HCT116 (cell line): ENCODE measurements at regions of chr2 and their contacts with region 1.

Region 1: GRCh38 chr2:157769856-157770255 is 106.3 kb downstream of the ACVR1 start:
- DNase-seq: no peak
- ATAC-seq: no peak
- H3K4me3 ChIP-seq: no peak overlapping the region
- H3K27ac ChIP-seq: no peak overlapping the region
- H3K4me1 ChIP-seq: no peaks in the 10 kb centered on the region
- H3K27me3 ChIP-seq: no peaks in the 10 kb centered on the region
- CTCF ChIP-seq: no peak
- POLR2A ChIP-seq: no peak
- RAD21 ChIP-seq: no peak

Region 2: GRCh38 chr2:156476850-156477206 is 1293.0 kb before region 1 on chr2:
- CTCF ChIA-PET with region 1: no interaction called
- POLR2A ChIA-PET with region 1: no interaction called
- RAD21 ChIA-PET with region 1: no interaction called
- intact Hi-C with region 1: no loop called
- DNase-seq: no peak
- ATAC-seq: no peak
- H3K4me3 ChIP-seq: no peak overlapping the region
- H3K27ac ChIP-seq: no peak overlapping the region
- H3K4me1 ChIP-seq: peaks cover 0 to 4% of the 10 kb centered on the region in 2 experiments; a peak in 1 of 4 replicates
- H3K27me3 ChIP-seq: no peaks in the 10 kb centered on the region
- CTCF ChIP-seq: no peak
- POLR2A ChIP-seq: no peak
- RAD21 ChIP-seq: no peak

Region 3: GRCh38 chr2:157509744-157510143 is 260.1 kb before region 1 on chr2:
- CTCF ChIA-PET with region 1: no interaction called
- POLR2A ChIA-PET with region 1: no interaction called
- RAD21 ChIA-PET with region 1: no interaction called
- intact Hi-C with region 1: loop called (anchors 5 kb)
- DNase-seq: no peak
- ATAC-seq: no peak
- H3K4me3 ChIP-seq: no peak overlapping the region
- H3K27ac ChIP-seq: no peak overlapping the region
- H3K4me1 ChIP-seq: peaks cover 0 to 4% of the 10 kb centered on the region in 2 experiments; a peak in 1 of 4 replicates
- H3K27me3 ChIP-seq: no peaks in the 10 kb centered on the region
- CTCF ChIP-seq: peak in 1 of 3 experiments; percentile 39; a peak in 2 of 6 replicates
- POLR2A ChIP-seq: no peak
- RAD21 ChIP-seq: peak; percentile 50

Region 4: GRCh38 chr2:157596992-157597681 is 172.7 kb before region 1 on chr2:
- CTCF ChIA-PET with region 1: no interaction called
- POLR2A ChIA-PET with region 1: no interaction called
- RAD21 ChIA-PET with region 1: no interaction called
- intact Hi-C with region 1: no loop called
- DNase-seq: no peak
- ATAC-seq: no peak
- H3K4me3 ChIP-seq: no peak overlapping the region
- H3K27ac ChIP-seq: no peak overlapping the region
- H3K4me1 ChIP-seq: no peaks in the 10 kb centered on the region
- H3K27me3 ChIP-seq: no peaks in the 10 kb centered on the region
- CTCF ChIP-seq: no peak
- POLR2A ChIP-seq: no peak
- RAD21 ChIP-seq: no peak

Region 5: DNA sequence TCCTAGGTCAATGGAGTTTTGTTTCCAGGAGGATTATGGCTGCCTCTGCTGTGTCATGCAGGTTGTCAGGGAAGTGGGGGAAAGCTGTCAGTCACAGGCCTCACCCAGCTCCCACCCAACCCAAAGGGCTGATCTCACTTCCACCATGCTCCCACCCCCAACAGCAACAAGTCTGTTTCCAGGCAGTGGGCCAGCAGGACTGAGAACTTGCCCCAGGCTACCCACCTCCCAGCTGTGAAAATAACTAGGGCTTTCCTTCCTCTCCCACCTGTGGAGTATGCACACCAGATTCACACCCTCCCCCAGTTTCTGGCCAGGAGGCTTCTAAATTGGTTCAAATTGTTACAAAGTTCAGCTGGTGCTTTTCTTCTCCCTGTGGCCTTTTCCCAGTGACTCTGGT is 201.8 kb after region 1 on chr2:
- CTCF ChIA-PET with region 1: no interaction called
- POLR2A ChIA-PET with region 1: no interaction called
- RAD21 ChIA-PET with region 1: no interaction called
- intact Hi-C with region 1: no loop called
- DNase-seq: no peak
- ATAC-seq: no peak
- H3K4me3 ChIP-seq: no peak overlapping the region
- H3K27ac ChIP-seq: no peak overlapping the region
- H3K4me1 ChIP-seq: no peaks in the 10 kb centered on the region
- H3K27me3 ChIP-seq: no peaks in the 10 kb centered on the region
- CTCF ChIP-seq: no peak
- POLR2A ChIP-seq: no peak
- RAD21 ChIP-seq: no peak